A549 (cell line): ENCODE measurements at regions of chr14 and their contacts with region 1.

Region 1: GRCh38 chr14:89027097-89027740 is 202.8 kb downstream of the TTC8 start:
- DNase-seq: peak; percentile 28 to 72
- ATAC-seq: peak; percentile 90 to 95
- H3K4me3 ChIP-seq: peak overlapping the region; percentile 46
- H3K27ac ChIP-seq: peak overlapping the region; percentile 52 to 86
- H3K4me1 ChIP-seq: no peaks in the 10 kb centered on the region
- CTCF ChIP-seq: peak; percentile 96
- EP300 ChIP-seq: no peak
- POLR2A ChIP-seq: no peak
- RAD21 ChIP-seq: peak; percentile 52 to 95

Region 2: GRCh38 chr14:88919502-88919901 is 107.7 kb before region 1 on chr14:
- CTCF ChIA-PET with region 1: interaction called, 17 read pairs
- POLR2A ChIA-PET with region 1: no interaction called
- DNase-seq: peak; percentile 15 to 54
- ATAC-seq: peak; percentile 78 to 89
- H3K4me3 ChIP-seq: no peak overlapping the region
- H3K27ac ChIP-seq: no peak overlapping the region
- H3K4me1 ChIP-seq: 0 out of 3 replicates have a peak, but pooled peaks cover 5% of the 10 kb centered on the region
- CTCF ChIP-seq: peak; percentile 31; the same call in 2 of the 3 replicates
- EP300 ChIP-seq: no peak
- POLR2A ChIP-seq: no peak
- RAD21 ChIP-seq: peak; percentile 66 to 73

Region 3: DNA sequence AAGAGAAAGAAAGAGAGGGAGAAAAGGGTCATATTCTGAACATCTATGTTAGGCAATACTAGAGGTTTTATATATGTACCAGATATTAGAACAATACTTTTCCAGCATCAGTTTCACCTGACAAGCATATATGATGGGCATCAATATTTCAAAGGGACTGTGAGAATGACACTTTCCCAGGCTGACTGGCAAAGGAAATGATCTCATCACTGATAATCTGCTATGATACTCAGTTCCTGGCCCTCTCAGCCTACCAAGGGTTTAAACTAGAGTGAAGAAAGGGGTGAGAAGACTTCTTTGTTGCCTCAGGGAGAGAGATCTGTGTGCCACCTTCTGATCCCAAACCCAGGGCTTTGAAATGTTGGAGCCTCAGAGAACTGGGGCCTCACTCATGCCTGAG is 19.3 kb before region 1 on chr14:
- CTCF ChIA-PET with region 1: interaction called, 15 read pairs
- POLR2A ChIA-PET with region 1: no interaction called
- DNase-seq: no peak
- ATAC-seq: no peak
- H3K4me3 ChIP-seq: no peak overlapping the region
- H3K27ac ChIP-seq: peak overlapping the region in 1 of 2 experiments; percentile 36; a peak in 2 of 6 replicates
- H3K4me1 ChIP-seq: peaks cover 9% of the 10 kb centered on the region
- CTCF ChIP-seq: no peak
- EP300 ChIP-seq: no peak
- POLR2A ChIP-seq: no peak
- RAD21 ChIP-seq: no peak

Region 4: GRCh38 chr14:89040460-89041259 is 13.4 kb after region 1 on chr14:
- CTCF ChIA-PET with region 1: interaction called, 47 read pairs
- POLR2A ChIA-PET with region 1: no interaction called
- DNase-seq: peak; percentile 76
- ATAC-seq: peak; percentile 93 to 96
- H3K4me3 ChIP-seq: peak overlapping the region; percentile 44
- H3K27ac ChIP-seq: peak overlapping the region; percentile 81 to 88
- H3K4me1 ChIP-seq: peaks cover 10% of the 10 kb centered on the region
- CTCF ChIP-seq: peak; percentile 95
- EP300 ChIP-seq: no peak
- POLR2A ChIP-seq: no peak
- RAD21 ChIP-seq: peak; percentile 91 to 97

Region 5: GRCh38 chr14:89303457-89304435 is 276.5 kb after region 1 on chr14:
- CTCF ChIA-PET with region 1: no interaction called
- POLR2A ChIA-PET with region 1: no interaction called
- DNase-seq: no peak
- ATAC-seq: peak in 1 of 2 experiments; percentile 33; a peak in 3 of 6 replicates
- H3K4me3 ChIP-seq: no peak overlapping the region
- H3K27ac ChIP-seq: peak overlapping the region in 1 of 2 experiments; percentile 22; a peak in 1 of 6 replicates
- H3K4me1 ChIP-seq: peaks cover 14% of the 10 kb centered on the region
- CTCF ChIP-seq: no peak
- EP300 ChIP-seq: no peak
- POLR2A ChIP-seq: no peak
- RAD21 ChIP-seq: no peak

Region 6: DNA sequence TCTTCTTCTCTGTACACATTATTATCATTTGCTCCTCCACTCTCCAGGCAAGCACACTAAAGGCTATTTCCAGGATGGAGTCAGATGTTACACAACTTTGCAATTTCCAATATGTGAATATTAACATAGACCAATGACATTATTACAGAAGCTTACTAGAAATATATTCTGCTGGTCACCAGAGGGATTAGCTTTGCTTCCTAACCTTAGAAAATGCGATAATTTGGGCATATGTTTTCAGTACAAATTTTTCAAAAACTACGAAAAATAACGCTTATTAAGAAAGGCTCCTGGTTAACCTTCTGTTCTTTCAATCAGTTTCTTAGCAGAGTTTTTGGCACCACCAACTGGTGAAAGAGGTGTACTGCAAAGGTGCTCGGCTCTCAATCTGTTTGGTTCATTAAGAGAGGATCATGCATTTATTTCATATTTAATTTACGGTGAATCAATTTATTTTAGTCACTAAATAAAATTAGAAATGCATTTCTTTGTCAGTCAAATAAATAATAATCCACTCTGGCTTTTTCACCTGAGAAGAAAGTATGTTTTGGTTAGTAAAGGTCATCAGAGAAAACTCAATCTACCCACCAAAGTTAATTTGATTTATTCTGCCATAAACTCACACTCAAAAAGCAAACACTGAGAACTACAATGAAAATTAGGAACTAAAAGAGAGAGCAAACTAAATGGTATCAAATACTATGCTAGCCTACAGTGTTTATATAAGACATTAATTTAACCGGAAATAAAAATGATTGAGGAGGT is 888.1 kb after region 1 on chr14:
- CTCF ChIA-PET with region 1: interaction called, 23 read pairs
- POLR2A ChIA-PET with region 1: no interaction called
- DNase-seq: peak; percentile 46 to 65
- ATAC-seq: peak in 1 of 2 experiments; percentile 62; a peak in 3 of 6 replicates
- H3K4me3 ChIP-seq: no peak overlapping the region
- H3K27ac ChIP-seq: no peak overlapping the region
- H3K4me1 ChIP-seq: peaks cover 31% of the 10 kb centered on the region
- CTCF ChIP-seq: peak; percentile 94
- EP300 ChIP-seq: no peak
- POLR2A ChIP-seq: no peak
- RAD21 ChIP-seq: peak; percentile 87 to 92